Cardiac septum (tissue), 1 donor: ENCODE measurements at regions of chr14 and their contacts with region 1.

Region 1: GRCh38 chr14:29927376-29928116 is at the start of gene PRKD1:
- DNase-seq: peak; percentile 81
- total RNA-seq, gene PRKD1: 4.3 TPM

Region 2: DNA sequence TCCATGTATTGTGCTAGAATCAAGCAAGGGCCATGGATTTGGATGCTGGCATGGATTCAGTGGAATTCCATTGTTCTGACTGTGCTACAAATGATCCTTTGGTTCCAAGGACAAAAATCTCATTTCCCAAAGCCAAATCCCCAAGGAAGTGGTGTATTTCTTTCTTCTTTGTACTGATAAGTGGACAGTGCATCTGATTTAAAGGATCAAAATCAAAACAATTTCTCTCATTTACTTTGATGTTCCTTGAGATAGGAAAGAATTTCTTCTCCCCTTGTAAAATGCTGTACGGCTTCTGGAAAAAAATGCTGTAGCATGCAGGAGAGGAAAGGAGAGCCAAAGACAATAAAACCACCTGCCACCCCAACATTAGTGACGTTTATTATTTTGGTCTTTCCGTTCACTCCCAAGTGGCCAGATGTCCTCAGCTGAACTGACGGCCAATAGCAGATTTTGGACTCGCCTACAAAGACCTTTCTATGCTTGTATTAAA is 185.6 kb before region 1 on chr14:
- intact Hi-C with region 1: loop called (anchors 5 kb)
- DNase-seq: no peak

Region 3: GRCh38 chr14:29810682-29811081 is 116.9 kb before region 1 on chr14:
- intact Hi-C with region 1: loop called (anchors 10 kb)
- DNase-seq: no peak

Region 4: GRCh38 chr14:29846339-29847055 is 81.0 kb before region 1 on chr14:
- intact Hi-C with region 1: no loop called
- DNase-seq: no peak